ENCODE measurements at regions of chr1 and their contacts with region 1.

Region 1: GRCh38 chr1:14850566-14850965 is 252.1 kb downstream of the KAZN start:
- DNase-seq: peak; percentile 36 to 55 (median 38)
- ATAC-seq: peak; percentile 85
- H3K4me3 ChIP-seq: no peak overlapping the region
- H3K27ac ChIP-seq: no peak overlapping the region
- H3K4me1 ChIP-seq: peaks cover 0 to 6% of the 10 kb centered on the region in 2 experiments; a peak in 4 of 5 replicates
- H3K27me3 ChIP-seq: peaks cover 31 to 37% of the 10 kb centered on the region in 2 experiments
- CTCF ChIP-seq: peak; percentile 55 to 75 (median 74)
- EP300 ChIP-seq: no peak
- POLR2A ChIP-seq: no peak
- RAD21 ChIP-seq: peak; percentile 78 to 85

Region 2: DNA sequence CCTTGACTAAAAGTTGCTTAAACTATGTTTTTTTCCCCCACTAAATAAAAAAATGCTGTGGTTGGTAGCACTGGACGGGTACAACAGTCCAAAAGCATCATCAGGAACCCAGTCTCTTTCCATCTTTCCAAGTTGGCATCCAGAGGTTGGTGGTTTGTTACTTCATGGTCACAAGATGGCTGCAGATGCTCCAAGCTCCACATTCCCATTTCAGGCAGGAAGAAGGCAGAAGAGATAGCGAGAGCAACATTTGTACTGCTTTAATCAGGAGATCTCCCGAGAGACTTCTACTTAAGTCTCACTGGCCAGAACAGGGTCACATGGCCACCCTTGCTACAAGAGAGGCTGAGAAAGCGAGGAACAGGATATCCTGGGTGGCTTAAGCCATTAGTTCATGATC is 21.9 kb before region 1 on chr1:
- CTCF ChIA-PET with region 1: no interaction called
- POLR2A ChIA-PET with region 1: interaction called, 5 read pairs
- in situ Hi-C with region 1: no loop called
- intact Hi-C with region 1: loop called (anchors 2 kb)
- DNase-seq: no peak
- ATAC-seq: no peak
- H3K4me3 ChIP-seq: no peak overlapping the region
- H3K27ac ChIP-seq: no peak overlapping the region
- H3K4me1 ChIP-seq: peaks cover 4 to 9% of the 10 kb centered on the region in 2 experiments; a peak in 4 of 5 replicates
- H3K27me3 ChIP-seq: peaks cover 0 to 3% of the 10 kb centered on the region in 2 experiments; a peak in 2 of 5 replicates
- CTCF ChIP-seq: no peak
- EP300 ChIP-seq: no peak
- POLR2A ChIP-seq: no peak
- RAD21 ChIP-seq: no peak